GM12878 (cell line): ENCODE measurements at regions of chr2 and their contacts with region 1.

Region 1: GRCh38 chr2:105789745-105790460 is 45.2 kb downstream of the NCK2 start:
- DNase-seq: peak; percentile 74
- ATAC-seq: peak; percentile 93
- H3K4me3 ChIP-seq: peak overlapping the region; percentile 29; the same call in 1 of the 2 replicates
- H3K27ac ChIP-seq: peak overlapping the region; percentile 76
- H3K4me1 ChIP-seq: peaks cover 37% of the 10 kb centered on the region
- H3K27me3 ChIP-seq: no peaks in the 10 kb centered on the region
- CTCF ChIP-seq: peak; percentile 32 to 44 (median 37); a peak in 4 of 6 replicates
- EP300 ChIP-seq: no peak
- POLR2A ChIP-seq: no peak
- RAD21 ChIP-seq: peak; percentile 56

Region 2: GRCh38 chr2:105671156-105671555 is 118.7 kb before region 1 on chr2:
- CTCF ChIA-PET with region 1: no interaction called
- POLR2A ChIA-PET with region 1: no interaction called
- RAD21 ChIA-PET with region 1: no interaction called
- SMC1A ChIA-PET with region 1: no interaction called
- in situ Hi-C with region 1: no loop called
- intact Hi-C with region 1: no loop called
- DNase-seq: no peak
- ATAC-seq: no peak
- H3K4me3 ChIP-seq: no peak overlapping the region
- H3K27ac ChIP-seq: no peak overlapping the region
- H3K4me1 ChIP-seq: no peaks in the 10 kb centered on the region
- H3K27me3 ChIP-seq: no peaks in the 10 kb centered on the region
- CTCF ChIP-seq: no peak
- EP300 ChIP-seq: no peak
- POLR2A ChIP-seq: no peak
- RAD21 ChIP-seq: no peak

Region 3: DNA sequence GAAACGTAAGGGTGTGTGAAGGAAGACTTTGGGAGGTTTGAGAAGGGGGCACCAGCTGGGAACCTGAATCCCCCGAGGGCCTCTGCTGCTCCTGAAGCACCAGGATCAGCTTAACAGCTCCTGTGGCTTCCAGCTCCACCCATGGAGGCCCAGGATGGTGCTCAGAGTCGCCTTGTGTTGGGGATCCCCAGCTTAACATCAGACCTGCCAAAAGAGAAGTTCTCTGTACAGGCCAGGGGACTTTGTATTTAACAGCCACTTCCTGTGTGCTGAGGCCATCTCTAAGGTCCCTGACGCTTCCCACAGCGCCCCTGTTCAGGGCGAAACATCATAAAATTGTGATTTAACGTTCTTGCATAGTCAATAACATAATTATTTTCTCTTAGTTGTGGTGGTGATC is 32.3 kb after region 1 on chr2:
- CTCF ChIA-PET with region 1: interaction called, 4 read pairs
- POLR2A ChIA-PET with region 1: interaction called, 3 read pairs
- RAD21 ChIA-PET with region 1: interaction called, 10 read pairs
- SMC1A ChIA-PET with region 1: interaction called, 3 read pairs
- in situ Hi-C with region 1: no loop called
- intact Hi-C with region 1: no loop called
- DNase-seq: no peak
- ATAC-seq: peak; percentile 99
- H3K4me3 ChIP-seq: no peak overlapping the region; the same call in 1 of the 2 replicates
- H3K27ac ChIP-seq: peak overlapping the region; percentile 73
- H3K4me1 ChIP-seq: peaks cover 13% of the 10 kb centered on the region; the same call in 1 of the 2 replicates
- H3K27me3 ChIP-seq: no peaks in the 10 kb centered on the region
- CTCF ChIP-seq: no peak
- EP300 ChIP-seq: no peak
- POLR2A ChIP-seq: no peak
- RAD21 ChIP-seq: peak; percentile 14; the same call in 1 of the 2 replicates